ENCODE measurements at regions of chr22 and their contacts with region 1.

Region 1: DNA sequence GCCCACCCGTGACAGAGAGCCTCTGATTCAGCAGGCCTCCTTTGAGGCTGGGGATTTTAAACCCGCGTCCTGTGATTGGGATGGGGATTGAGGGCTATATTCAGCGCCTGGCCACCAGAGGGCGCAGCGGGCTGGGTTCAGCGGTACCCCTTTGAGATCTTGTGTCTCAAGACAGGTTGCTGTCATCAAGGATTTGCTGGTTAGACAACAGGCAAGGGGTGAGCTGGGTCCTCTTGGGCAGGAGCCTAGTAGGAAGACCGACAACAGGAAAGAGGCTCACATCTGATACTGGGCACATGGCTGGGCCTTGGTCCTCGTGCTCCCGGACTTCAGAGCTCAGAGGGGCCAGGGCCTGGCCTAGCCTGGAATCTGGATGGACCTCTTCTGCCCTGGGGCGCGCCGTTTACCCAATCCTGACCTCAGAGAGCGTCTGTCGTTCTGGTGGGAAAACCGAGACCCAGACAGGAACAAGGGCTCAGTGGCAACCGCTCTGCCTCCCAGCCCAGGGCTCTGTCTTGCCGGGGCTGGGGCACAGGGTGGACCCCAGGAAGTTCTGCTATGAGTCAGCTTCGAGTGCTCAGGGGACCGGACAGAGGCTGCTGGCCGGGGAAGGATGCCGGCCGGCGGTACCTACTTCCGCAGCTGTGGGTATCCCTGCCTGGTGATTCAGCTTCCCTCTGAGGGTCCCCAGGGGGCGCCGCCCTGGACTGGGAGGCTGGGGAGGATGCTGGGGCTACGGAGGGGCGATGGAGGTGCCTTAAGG is 929 bp upstream of the SLC35E4 start:
- H3K4me3 ChIP-seq: peak overlapping the region; percentile 3; the same call in 1 of the 2 replicates
- H3K27ac ChIP-seq: peak overlapping the region; percentile 49; the same call in 1 of the 2 replicates
- H3K4me1 ChIP-seq: peaks cover 9% of the 10 kb centered on the region
- CTCF ChIP-seq: peak; percentile 76

Region 2: GRCh38 chr22:30615543-30615954 is 19.1 kb before region 1 on chr22:
- CTCF ChIA-PET with region 1: interaction called, 29 read pairs
- POLR2A ChIA-PET with region 1: no interaction called
- H3K4me3 ChIP-seq: no peak overlapping the region
- H3K27ac ChIP-seq: no peak overlapping the region
- H3K4me1 ChIP-seq: no peaks in the 10 kb centered on the region
- CTCF ChIP-seq: no peak

Region 3: GRCh38 chr22:30685178-30685577 is 50.5 kb after region 1 on chr22:
- CTCF ChIA-PET with region 1: interaction called, 11 read pairs
- POLR2A ChIA-PET with region 1: no interaction called
- H3K4me3 ChIP-seq: no peak overlapping the region
- H3K27ac ChIP-seq: no peak overlapping the region
- H3K4me1 ChIP-seq: no peaks in the 10 kb centered on the region
- CTCF ChIP-seq: no peak

Region 4: GRCh38 chr22:30731658-30732057 is 97.0 kb after region 1 on chr22:
- CTCF ChIA-PET with region 1: interaction called, 17 read pairs
- POLR2A ChIA-PET with region 1: no interaction called
- H3K4me3 ChIP-seq: no peak overlapping the region
- H3K27ac ChIP-seq: no peak overlapping the region
- H3K4me1 ChIP-seq: no peaks in the 10 kb centered on the region
- CTCF ChIP-seq: no peak

Region 5: DNA sequence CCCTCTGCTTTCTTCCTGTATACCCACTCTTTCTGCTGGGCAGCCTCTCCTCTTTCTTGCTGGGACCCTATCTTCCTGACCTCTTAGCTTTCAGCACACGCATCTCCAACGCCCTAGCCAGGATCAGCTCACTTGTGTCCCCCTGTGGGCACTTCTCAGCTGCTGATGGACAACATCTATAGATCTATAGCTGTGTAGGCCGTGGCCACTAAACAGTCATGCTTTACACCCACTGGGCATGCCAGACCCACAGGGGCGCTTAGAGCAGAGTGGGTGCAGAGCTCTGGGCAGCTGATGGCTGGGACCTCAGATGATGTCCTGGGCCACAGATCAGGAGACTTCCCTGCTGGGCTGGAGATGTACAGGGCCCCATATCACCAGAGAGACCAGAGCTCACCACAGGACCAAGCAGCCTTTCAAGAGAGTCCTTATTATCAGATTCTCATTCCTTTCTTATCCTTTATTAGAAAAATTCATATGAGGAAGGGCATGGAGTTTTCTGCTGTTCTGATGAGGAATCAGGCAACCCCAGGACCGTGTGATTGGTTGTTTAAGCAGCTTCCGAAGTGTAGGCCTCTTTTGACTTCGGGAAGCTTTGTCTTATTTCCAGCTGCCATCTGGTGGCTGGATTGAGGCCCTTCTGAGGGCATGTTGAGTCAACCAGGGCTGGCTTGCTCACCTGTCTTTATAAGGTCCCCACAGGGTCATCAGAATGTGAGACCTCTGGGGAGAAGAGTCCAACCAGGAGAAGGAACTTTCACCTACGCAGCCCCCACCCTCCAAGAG is 120.5 kb after region 1 on chr22:
- CTCF ChIA-PET with region 1: interaction called, 100 read pairs
- POLR2A ChIA-PET with region 1: interaction called, 11 read pairs
- H3K4me3 ChIP-seq: no peak overlapping the region
- H3K27ac ChIP-seq: no peak overlapping the region
- H3K4me1 ChIP-seq: no peaks in the 10 kb centered on the region
- CTCF ChIP-seq: peak; percentile 45; the same call in 1 of the 2 replicates

Region 6: GRCh38 chr22:30804626-30805025 is 170.0 kb after region 1 on chr22:
- CTCF ChIA-PET with region 1: no interaction called
- POLR2A ChIA-PET with region 1: no interaction called
- H3K4me3 ChIP-seq: no peak overlapping the region
- H3K27ac ChIP-seq: no peak overlapping the region
- H3K4me1 ChIP-seq: peaks cover 3% of the 10 kb centered on the region; the same call in 1 of the 2 replicates
- CTCF ChIP-seq: no peak